Ascending aorta (tissue), 2 donors: ENCODE measurements at regions of chr17 and their contacts with region 1.

Region 1: GRCh38 chr17:38868817-38869525 is 887 bp upstream of the LASP1 start:
- DNase-seq: peak; percentile 80 to 97
- H3K4me3 ChIP-seq: peak overlapping the region; percentile 86 to 97
- H3K27ac ChIP-seq: peak overlapping the region; percentile 94 to 96
- H3K4me1 ChIP-seq: peaks cover 16 to 33% of the 10 kb centered on the region in 2 donors
- H3K27me3 ChIP-seq: no peaks in the 10 kb centered on the region
- CTCF ChIP-seq: peak in 2 of 3 experiments; percentile 22 to 28

Region 2: DNA sequence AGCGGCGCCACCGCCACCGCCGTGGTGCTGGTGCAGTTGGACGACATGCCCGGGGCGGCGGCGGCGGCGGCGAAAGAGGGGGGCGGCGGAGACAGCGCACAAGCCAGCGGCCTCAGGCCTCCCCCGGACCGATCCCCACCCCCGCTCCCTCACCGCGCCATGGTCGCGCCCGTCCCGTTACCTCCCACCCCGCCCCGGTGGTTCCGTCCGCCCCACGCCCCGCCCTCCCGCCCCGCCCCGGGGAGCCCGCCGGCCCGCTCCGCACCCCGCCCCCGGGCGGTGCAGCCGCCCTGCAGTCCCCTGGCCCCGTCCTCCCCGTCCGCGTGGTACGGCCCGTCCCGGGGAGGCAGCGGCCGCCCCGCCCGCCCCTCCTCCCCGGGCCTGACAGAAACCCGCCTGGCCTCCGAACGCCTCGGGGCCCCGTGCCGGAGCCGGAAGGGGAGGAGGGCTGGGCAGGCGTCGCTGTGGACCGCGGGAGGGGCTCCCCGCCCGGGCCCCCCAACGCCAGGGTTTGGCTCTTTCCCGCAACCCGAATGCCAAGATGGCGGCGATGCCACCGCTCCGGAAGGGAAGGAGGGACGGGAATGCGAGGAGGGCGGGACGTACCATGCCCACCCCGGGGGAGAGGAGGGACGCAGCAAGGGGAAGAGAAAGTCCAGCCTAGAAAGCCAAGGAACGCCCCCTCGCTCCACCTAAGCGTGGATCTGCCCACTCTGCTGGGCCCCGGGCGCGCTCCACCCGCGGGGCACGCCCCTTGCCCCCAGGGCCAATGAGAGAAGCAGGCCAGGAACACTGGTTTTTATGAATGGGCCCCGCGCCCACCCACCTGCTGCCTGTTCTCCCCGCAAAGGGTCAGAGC is 69.4 kb before region 1 on chr17 and contains the start of gene PIP4K2B:
- intact Hi-C with region 1: loop called (anchors 1 kb)
- DNase-seq: peak; percentile 85 to 98
- H3K4me3 ChIP-seq: peak within 1 kb of the TSS; percentile 88 to 93
- H3K27ac ChIP-seq: peak within 1 kb of the TSS; percentile 98 to 100
- H3K4me1 ChIP-seq: peaks cover 7 to 25% of the 10 kb centered on the region in 2 donors
- H3K27me3 ChIP-seq: no peaks in the 10 kb centered on the region
- CTCF ChIP-seq: no peak
- total RNA-seq, gene PIP4K2B: 45.0 TPM

Region 3: DNA sequence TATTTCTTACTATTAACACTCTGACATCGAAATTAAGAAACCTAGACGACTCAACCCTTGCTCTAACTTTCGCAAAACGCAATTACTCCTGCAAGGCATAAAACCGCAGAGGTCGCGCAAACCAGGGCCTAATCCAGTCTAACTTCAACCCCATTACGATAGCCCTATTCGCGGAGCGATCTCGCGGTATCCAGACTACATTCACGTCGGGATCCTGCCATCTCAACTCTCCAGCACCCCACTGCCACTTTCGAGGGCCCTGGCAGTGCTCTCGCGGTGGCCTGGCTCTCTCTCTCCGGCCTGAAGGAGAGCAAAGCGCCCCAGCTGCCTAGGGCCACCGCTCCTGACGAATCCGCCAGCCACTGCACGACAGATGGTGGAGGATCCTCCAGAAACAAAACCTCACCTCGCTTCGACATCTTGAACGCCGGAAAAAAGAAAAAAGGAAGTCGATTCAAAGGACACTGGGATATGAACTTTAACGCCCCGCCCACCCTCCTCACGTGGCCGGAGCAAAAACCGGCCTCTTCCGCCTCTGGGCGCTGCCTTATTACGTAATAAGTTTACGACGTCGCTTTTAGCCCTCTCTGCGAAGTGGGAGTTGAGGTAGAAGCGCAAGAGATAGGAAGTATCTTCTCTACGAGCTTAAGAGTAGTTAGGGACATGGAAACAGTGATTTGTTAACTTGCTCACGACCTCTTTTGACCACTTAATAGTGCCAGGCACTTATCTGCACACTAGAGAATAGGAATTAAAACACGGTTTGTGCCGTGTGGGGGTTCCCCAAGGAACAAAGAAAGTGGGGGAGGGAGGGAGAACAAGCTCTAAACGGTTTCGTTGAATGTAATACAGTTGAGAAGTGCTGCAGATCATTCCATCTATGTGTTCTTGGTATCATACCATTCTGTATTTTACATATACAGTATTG is 15.4 kb before region 1 on chr17 and contains the start of gene RPL23:
- intact Hi-C with region 1: loop called (anchors 1 kb)
- DNase-seq: peak; percentile 81 to 97
- H3K4me3 ChIP-seq: peak within 1 kb of the TSS; percentile 70 to 80
- H3K27ac ChIP-seq: peak within 1 kb of the TSS; percentile 87 to 91
- H3K4me1 ChIP-seq: peaks cover 13 to 19% of the 10 kb centered on the region in 2 donors
- H3K27me3 ChIP-seq: no peaks in the 10 kb centered on the region
- CTCF ChIP-seq: no peak
- total RNA-seq, gene RPL23: 1,091 TPM

Region 4: GRCh38 chr17:39153599-39154051 is 284.7 kb after region 1 on chr17:
- intact Hi-C with region 1: loop called (anchors 1 kb)
- DNase-seq: peak; percentile 90 to 98
- H3K4me3 ChIP-seq: peak overlapping the region; percentile 85 to 94
- H3K27ac ChIP-seq: peak overlapping the region; percentile 84 to 94
- H3K4me1 ChIP-seq: peaks cover 12 to 15% of the 10 kb centered on the region in 2 donors
- H3K27me3 ChIP-seq: no peaks in the 10 kb centered on the region
- CTCF ChIP-seq: peak in 2 of 3 experiments; percentile 16 to 33